Esophagus muscularis mucosa (tissue), 4 donors: ENCODE measurements at regions of chr15 and their contacts with region 1.

Region 1: DNA sequence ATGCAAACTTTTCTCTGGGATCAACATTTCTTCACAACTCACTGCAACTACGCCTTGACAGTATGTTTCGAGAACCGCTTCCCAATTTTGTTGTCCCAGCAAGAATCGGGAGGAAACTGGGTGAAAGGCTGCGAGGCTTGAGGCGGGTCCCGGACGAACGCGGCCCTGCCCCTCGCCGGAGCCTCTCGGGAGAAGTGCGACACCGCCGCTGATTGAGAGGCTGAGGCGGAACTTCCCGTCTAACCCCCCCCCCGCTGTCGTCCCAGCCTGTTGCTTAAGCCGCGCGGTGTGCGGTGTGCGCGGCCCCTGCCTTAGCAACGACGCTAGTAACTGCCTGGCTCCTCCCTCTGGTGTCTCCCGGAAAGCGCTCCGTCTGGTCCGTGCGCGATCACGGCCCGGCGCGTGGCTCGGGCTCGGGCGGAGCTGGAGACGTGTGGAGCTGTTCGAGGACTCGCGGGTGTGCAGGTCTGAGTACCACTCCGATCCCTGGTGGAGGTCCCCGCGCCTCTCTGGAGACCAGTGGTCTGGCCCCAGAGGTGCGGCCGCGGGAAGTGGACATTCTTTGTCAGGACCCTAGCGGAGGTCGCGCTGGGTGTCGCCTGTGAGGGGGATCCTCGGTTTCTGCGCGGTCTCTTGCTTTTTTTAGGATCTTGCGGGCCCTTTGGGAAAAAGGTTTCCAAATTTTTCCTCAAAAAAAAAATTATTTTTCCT is at the starts of genes DTWD1 and FAM227B:
- DNase-seq: peak; percentile 98
- H3K4me3 ChIP-seq: peak within 1 kb of the TSS; percentile 73 to 80 (median 75)
- H3K27ac ChIP-seq: peak within 1 kb of the TSS; percentile 87 to 91 (median 88)
- H3K4me1 ChIP-seq: peaks cover 11 to 46% (median 36%) of the 10 kb centered on the region in 4 donors
- H3K27me3 ChIP-seq: no peaks in the 10 kb centered on the region
- CTCF ChIP-seq: peak in 2 of 3 experiments; percentile 9 to 23
- EP300 ChIP-seq: no peak
- POLR2A ChIP-seq: peak; percentile 93
- total RNA-seq, gene DTWD1: 21.0 to 35.3 (median 27.8) TPM
- total RNA-seq, gene FAM227B: 5.8 to 13.7 (median 10.3) TPM

Region 2: DNA sequence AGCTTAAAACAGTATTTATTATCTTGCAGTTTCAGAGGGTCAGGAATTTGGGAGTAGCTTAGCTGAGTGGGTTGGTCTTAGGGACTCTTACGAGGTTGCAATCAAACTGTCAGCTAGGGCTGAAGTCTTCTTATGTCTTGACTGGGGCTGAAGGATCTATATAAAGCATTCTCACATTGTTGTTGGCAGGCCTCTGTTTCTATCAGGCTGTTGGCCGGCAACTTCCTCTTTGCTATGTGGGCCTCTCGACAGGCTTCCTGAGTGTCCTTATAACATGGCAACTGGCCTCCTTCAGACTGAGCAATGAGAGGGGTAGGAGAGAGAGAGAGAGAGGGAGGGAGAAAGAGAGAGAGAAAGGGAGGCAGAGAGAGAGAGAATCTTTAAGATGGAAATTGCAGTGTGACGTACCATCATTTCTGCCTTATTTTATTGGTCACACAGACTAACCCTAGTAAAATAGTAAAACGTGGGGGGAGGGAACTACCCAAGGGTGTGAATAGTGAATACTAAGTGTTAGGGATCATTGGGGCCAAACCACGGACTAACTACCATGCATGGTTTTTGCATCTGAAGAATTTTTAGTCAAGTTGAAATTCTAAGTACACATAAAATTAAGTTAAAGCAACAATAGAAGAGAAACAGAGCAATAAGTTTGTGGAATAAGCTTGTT is 181.7 kb before region 1 on chr15:
- intact Hi-C with region 1: loop called (anchors 5 kb)
- DNase-seq: no peak
- H3K4me3 ChIP-seq: peak overlapping the region in 2 of 4 donors; percentile 1 to 35
- H3K27ac ChIP-seq: peak overlapping the region; percentile 63 to 74 (median 66)
- H3K4me1 ChIP-seq: peaks cover 29 to 80% (median 80%) of the 10 kb centered on the region in 4 donors
- H3K27me3 ChIP-seq: no peaks in the 10 kb centered on the region
- CTCF ChIP-seq: no peak
- EP300 ChIP-seq: no peak
- POLR2A ChIP-seq: no peak

Region 3: DNA sequence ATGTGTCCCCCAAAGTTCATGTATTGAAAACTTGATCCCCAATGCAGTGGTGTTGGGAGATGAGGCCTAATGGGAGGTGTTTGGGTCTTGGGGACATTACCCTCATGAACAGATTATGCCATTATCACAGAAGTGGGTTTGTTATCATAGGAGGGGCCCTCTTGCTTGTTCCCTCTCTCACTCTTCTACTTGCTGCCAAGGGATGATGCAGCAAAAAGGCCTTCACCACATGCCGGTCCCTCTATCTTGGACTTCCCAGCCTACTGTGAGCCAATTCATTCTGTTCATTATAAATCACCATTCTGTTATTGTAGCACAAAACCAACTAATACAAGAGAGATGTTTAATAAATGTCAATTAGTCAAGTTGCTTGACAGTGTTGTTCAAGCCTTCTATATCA is 47.4 kb before region 1 on chr15:
- intact Hi-C with region 1: no loop called
- DNase-seq: no peak
- H3K4me3 ChIP-seq: no peak overlapping the region
- H3K27ac ChIP-seq: no peak overlapping the region
- H3K4me1 ChIP-seq: no peaks in the 10 kb centered on the region
- H3K27me3 ChIP-seq: no peaks in the 10 kb centered on the region
- CTCF ChIP-seq: no peak
- EP300 ChIP-seq: no peak
- POLR2A ChIP-seq: no peak

Region 4: DNA sequence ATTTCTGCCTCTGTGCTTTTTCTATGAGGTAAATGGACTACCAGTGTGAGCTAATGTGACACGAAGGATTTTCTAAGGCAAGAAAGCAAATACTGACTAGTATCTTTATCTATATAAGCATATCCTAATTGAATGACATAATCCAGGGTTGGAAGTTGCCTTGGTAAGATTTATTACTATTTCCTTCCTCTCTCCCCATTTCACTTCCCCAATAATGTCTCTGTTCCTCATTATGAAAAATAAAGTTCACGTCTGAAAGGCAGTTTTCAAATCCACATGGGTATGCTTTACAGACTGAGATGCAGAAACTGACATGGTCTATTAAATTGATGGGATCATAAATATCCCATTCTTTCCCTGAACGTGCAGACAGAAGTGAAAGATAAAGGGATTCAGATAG is 86.0 kb after region 1 on chr15:
- intact Hi-C with region 1: no loop called
- DNase-seq: no peak
- H3K4me3 ChIP-seq: no peak overlapping the region
- H3K27ac ChIP-seq: no peak overlapping the region
- H3K4me1 ChIP-seq: no peaks in the 10 kb centered on the region
- H3K27me3 ChIP-seq: no peaks in the 10 kb centered on the region
- CTCF ChIP-seq: no peak
- EP300 ChIP-seq: no peak
- POLR2A ChIP-seq: no peak

Region 5: GRCh38 chr15:50134520-50135024 is 513.8 kb after region 1 on chr15:
- intact Hi-C with region 1: loop called (anchors 10 kb)
- DNase-seq: no peak
- H3K4me3 ChIP-seq: no peak overlapping the region
- H3K27ac ChIP-seq: peak overlapping the region in 3 of 4 donors; percentile 67 to 83 (median 71)
- H3K4me1 ChIP-seq: peaks cover 0 to 27% (median 19%) of the 10 kb centered on the region in 4 donors
- H3K27me3 ChIP-seq: no peaks in the 10 kb centered on the region
- CTCF ChIP-seq: no peak
- EP300 ChIP-seq: no peak
- POLR2A ChIP-seq: no peak